PC-9 (cell line): ENCODE measurements at regions of chr3 and their contacts with region 1.

Region 1: DNA sequence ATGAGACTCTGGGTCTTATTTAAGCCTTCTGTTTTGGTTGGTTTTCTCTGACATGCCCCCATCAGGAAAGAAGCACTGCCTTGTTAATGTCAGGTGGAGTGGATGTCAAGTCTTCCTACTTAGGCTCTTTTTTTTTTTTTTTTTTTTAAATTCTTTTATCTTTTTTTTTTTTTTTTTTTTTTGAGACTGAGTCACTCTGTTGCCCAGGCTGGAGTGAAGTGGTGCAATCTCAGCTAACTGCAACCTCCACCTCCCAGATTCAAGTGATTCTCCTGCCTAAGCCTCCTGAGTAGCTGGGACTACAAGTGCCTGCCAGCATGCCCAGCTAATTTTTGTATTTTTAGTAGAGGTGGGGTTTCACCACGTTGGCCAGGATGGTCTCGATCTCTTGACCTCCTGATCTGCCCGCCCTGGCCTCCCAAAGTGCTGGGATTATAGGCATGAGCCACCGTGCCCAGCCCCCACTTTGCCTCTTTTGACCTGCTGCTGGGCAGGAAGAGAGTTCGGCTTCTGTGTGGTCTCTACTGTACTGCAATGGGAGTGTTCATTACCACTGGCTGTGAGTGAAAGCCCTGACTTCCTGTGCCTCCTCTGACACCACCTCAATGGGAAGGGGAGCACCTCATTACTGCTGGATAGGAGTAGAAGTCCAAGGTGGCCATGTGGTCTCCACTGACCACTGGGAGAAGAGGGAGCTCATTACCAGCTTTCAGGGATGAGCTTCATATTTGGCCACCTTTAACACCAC is 10.9 kb downstream of the CTDSPL start:
- DNase-seq: peak in 1 of 2 experiments; percentile 41
- H3K4me3 ChIP-seq: no peak overlapping the region
- H3K27ac ChIP-seq: no peak overlapping the region
- H3K4me1 ChIP-seq: 0 out of 2 replicates have a peak, but pooled peaks cover 4% of the 10 kb centered on the region
- H3K27me3 ChIP-seq: no peaks in the 10 kb centered on the region
- CTCF ChIP-seq: no peak

Region 2: GRCh38 chr3:37608061-37608702 is 264.4 kb before region 1 on chr3:
- CTCF ChIA-PET with region 1: interaction called, 11 read pairs
- POLR2A ChIA-PET with region 1: no interaction called
- intact Hi-C with region 1: no loop called
- DNase-seq: peak in 1 of 2 experiments; percentile 72
- H3K4me3 ChIP-seq: no peak overlapping the region
- H3K27ac ChIP-seq: no peak overlapping the region
- H3K4me1 ChIP-seq: peaks cover 14% of the 10 kb centered on the region; the same call in 1 of the 2 replicates
- H3K27me3 ChIP-seq: peaks cover 26% of the 10 kb centered on the region; the same call in 1 of the 2 replicates
- CTCF ChIP-seq: no peak

Region 3: DNA sequence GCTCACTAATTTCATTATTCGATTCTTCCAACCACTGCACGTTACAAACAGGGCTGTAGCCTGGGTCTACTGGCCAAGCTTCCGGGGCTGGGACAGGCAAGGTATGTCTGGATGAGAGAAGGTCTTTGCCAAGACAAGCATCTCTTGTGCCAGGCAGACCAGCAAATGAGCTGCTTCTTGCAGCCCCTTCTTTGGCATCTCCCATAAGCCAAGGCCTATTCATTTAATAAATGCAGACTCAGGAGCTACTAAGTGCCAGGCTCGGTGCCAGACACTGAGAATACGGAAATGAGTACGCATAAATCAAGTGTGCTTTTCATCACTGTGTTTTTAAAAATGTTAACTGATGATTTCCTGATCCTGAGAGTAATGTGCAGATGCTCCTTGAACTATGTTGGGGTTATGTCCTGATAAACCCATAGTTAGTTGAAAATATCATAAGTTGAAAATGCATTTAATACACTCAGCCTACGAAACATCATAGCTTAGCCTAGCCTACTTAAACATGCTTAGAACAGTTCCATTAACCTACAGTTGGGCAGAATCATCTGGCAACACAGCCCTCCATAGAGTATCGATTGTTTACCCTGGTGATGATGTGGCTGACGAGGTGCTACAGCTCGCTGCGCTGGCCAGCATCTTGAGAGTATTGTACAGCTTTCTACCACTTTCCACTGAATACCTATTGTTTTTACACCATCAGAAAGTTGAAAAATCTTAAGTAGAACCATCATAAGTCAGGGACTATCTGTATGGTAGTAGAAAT is 145.9 kb before region 1 on chr3:
- CTCF ChIA-PET with region 1: no interaction called
- POLR2A ChIA-PET with region 1: no interaction called
- intact Hi-C with region 1: no loop called
- DNase-seq: no peak
- H3K4me3 ChIP-seq: no peak overlapping the region
- H3K27ac ChIP-seq: no peak overlapping the region
- H3K4me1 ChIP-seq: no peaks in the 10 kb centered on the region
- H3K27me3 ChIP-seq: peaks cover 77% of the 10 kb centered on the region
- CTCF ChIP-seq: no peak